HepG2 (cell line): ENCODE measurements at regions of chr6 and their contacts with region 1.

Region 1: DNA sequence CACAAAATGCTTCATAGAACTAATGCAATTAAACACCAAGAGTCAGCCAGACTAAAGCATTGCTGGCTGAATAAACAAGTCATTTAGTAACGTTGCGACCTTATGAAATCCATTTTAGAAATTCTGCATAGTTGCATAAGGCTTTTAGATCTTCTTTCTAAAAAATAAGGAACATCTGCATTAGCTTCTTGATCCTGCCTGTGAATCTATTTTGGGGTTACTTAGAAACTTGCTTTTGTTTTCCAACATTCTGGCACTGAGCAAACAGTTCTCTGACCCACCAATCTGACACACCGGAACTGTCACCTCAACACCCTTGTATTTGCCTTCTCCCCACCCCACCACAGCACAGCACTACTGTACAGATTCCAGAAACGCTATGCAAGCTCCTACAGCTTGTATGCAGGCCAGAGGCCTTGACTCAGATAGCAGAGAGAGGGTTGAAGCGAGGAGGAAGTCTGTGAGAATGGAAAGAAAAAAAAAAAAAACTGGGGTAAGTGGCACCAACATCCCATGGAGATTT is 55.0 kb downstream of the KIF13A start:
- DNase-seq: peak; percentile 92
- ATAC-seq: peak; percentile 97
- H3K4me3 ChIP-seq: peak overlapping the region in 1 of 3 experiments; percentile 26; a peak in 1 of 6 replicates
- H3K27ac ChIP-seq: peak overlapping the region; percentile 73
- H3K4me1 ChIP-seq: peaks cover 68% of the 10 kb centered on the region
- H3K27me3 ChIP-seq: no peaks in the 10 kb centered on the region
- CTCF ChIP-seq: peak; percentile 24; the same call in 1 of the 2 replicates
- EP300 ChIP-seq: peak in 1 of 2 experiments; percentile 79; a peak in 2 of 4 replicates
- POLR2A ChIP-seq: no peak
- RAD21 ChIP-seq: 0 out of 2 replicates have a peak, but pooled peaks have one; percentile 33

Region 2: GRCh38 chr6:17865798-17866725 is 66.3 kb before region 1 on chr6:
- CTCF ChIA-PET with region 1: no interaction called
- POLR2A ChIA-PET with region 1: no interaction called
- in situ Hi-C with region 1: no loop called
- intact Hi-C with region 1: loop called (anchors 5 kb)
- DNase-seq: peak; percentile 53
- ATAC-seq: peak; percentile 43; the same call in 2 of the 3 replicates
- H3K4me3 ChIP-seq: no peak overlapping the region
- H3K27ac ChIP-seq: no peak overlapping the region
- H3K4me1 ChIP-seq: peaks cover 20% of the 10 kb centered on the region
- H3K27me3 ChIP-seq: no peaks in the 10 kb centered on the region
- CTCF ChIP-seq: no peak
- EP300 ChIP-seq: no peak
- POLR2A ChIP-seq: no peak
- RAD21 ChIP-seq: no peak

Region 3: GRCh38 chr6:17971128-17972073 is 39.0 kb after region 1 on chr6:
- CTCF ChIA-PET with region 1: no interaction called
- POLR2A ChIA-PET with region 1: no interaction called
- in situ Hi-C with region 1: no loop called
- intact Hi-C with region 1: no loop called
- DNase-seq: no peak
- ATAC-seq: no peak
- H3K4me3 ChIP-seq: no peak overlapping the region
- H3K27ac ChIP-seq: no peak overlapping the region
- H3K4me1 ChIP-seq: peaks cover 11% of the 10 kb centered on the region
- H3K27me3 ChIP-seq: no peaks in the 10 kb centered on the region
- CTCF ChIP-seq: no peak
- EP300 ChIP-seq: no peak
- POLR2A ChIP-seq: no peak
- RAD21 ChIP-seq: no peak